Ascending aorta (tissue), 2 donors: ENCODE measurements at regions of chr13 and their contacts with region 1.

Region 1: DNA sequence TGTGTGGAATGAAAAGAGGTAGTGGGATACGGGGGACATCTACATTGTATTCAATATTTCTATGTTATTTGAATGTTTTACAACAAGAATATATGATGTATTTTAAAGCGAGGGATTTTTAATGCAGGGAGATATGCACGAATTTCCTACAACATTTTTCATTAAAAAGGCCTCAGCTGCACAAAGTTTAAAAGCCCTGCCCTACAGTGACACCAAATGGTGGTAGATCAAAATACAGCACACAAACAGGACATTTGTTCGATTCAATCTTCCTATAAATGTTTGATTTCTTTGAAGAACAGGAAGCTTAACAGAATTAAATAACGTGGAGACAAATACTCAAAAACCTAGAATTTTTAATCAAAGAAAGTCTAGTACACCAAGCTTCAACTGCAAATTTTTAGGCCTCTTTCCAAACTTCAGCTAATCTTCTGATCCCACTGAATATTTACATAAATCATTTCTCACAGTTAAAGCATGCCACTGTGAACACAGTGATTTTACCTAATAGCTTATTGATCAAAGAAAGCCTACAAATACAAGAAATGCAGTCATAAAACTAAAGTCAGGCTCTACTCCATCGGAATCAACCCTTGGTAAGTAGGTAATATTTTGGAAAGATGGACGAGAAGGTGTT is 257.2 kb downstream of the DIAPH3 start:
- DNase-seq: no peak
- H3K4me3 ChIP-seq: no peak overlapping the region
- H3K27ac ChIP-seq: no peak overlapping the region
- H3K4me1 ChIP-seq: no peaks in the 10 kb centered on the region
- H3K27me3 ChIP-seq: no peaks in the 10 kb centered on the region
- CTCF ChIP-seq: peak in 2 of 3 experiments; percentile 46 to 62

Region 2: DNA sequence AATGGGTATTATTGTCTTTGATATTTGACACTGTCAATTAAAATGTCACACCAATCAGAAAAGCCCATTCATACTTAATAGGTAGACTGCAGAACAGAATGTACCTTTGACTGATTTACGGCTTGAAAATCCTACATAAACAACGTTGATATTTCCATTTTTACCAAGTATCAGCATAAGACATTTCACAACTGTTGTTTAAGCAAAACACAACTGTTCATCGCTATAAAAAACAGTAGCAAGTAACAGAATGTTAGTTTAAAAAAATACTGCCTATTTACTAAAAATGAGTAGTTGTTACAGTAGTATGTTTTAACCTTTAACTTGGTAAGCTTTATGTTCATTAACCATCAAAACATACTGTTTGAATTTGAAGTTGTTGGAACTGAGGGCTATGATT is 1178.4 kb before region 1 on chr13:
- intact Hi-C with region 1: no loop called
- DNase-seq: no peak
- H3K4me3 ChIP-seq: no peak overlapping the region
- H3K27ac ChIP-seq: no peak overlapping the region
- H3K4me1 ChIP-seq: no peaks in the 10 kb centered on the region
- H3K27me3 ChIP-seq: no peaks in the 10 kb centered on the region
- CTCF ChIP-seq: no peak

Region 3: DNA sequence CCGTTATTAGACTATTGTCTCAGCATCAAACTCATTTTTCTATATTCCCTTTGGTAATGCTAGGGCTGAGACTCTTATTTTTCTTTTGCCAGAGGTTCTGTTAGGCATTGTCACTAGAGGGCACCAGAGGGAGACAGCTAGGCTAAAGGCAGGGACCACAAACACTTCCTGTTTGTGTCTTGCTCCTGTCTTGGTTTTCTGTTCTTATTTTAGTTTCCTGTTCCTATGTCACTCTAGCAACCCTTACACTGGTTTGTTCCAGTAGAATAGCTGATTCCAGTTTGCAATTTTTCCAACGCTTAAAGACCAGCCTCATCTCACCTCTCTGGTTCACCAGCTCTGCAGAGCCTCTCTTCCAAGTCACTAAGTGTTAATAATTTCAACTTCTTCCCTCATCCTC is 514.8 kb before region 1 on chr13:
- intact Hi-C with region 1: loop called (anchors 2 kb)
- DNase-seq: no peak
- H3K4me3 ChIP-seq: no peak overlapping the region
- H3K27ac ChIP-seq: no peak overlapping the region
- H3K4me1 ChIP-seq: peaks cover 0 to 3% of the 10 kb centered on the region in 2 donors
- H3K27me3 ChIP-seq: no peaks in the 10 kb centered on the region
- CTCF ChIP-seq: peak; percentile 42 to 72 (median 56)

Region 4: GRCh38 chr13:59680429-59681024 is 226.0 kb before region 1 on chr13:
- intact Hi-C with region 1: loop called (anchors 5 kb)
- DNase-seq: no peak
- H3K4me3 ChIP-seq: no peak overlapping the region
- H3K27ac ChIP-seq: no peak overlapping the region
- H3K4me1 ChIP-seq: no peaks in the 10 kb centered on the region
- H3K27me3 ChIP-seq: no peaks in the 10 kb centered on the region
- CTCF ChIP-seq: peak in 2 of 3 experiments; percentile 19 to 51

Region 5: GRCh38 chr13:60075850-60076249 is 169.3 kb after region 1 on chr13:
- intact Hi-C with region 1: no loop called
- DNase-seq: no peak
- H3K4me3 ChIP-seq: no peak overlapping the region
- H3K27ac ChIP-seq: no peak overlapping the region
- H3K4me1 ChIP-seq: no peaks in the 10 kb centered on the region
- H3K27me3 ChIP-seq: no peaks in the 10 kb centered on the region
- CTCF ChIP-seq: no peak

Region 6: GRCh38 chr13:60494296-60494695 is 587.8 kb after region 1 on chr13:
- intact Hi-C with region 1: no loop called
- DNase-seq: no peak
- H3K4me3 ChIP-seq: no peak overlapping the region
- H3K27ac ChIP-seq: no peak overlapping the region
- H3K4me1 ChIP-seq: no peaks in the 10 kb centered on the region
- H3K27me3 ChIP-seq: no peaks in the 10 kb centered on the region
- CTCF ChIP-seq: no peak